AG04449 (cell line): ENCODE measurements at regions of chr1 and their contacts with region 1.

Region 1: GRCh38 chr1:16078925-16079656 is 5.6 kb upstream of the FAM131C start:
- DNase-seq: no peak
- H3K4me3 ChIP-seq: no peak overlapping the region
- CTCF ChIP-seq: peak; percentile 96

Region 2: DNA sequence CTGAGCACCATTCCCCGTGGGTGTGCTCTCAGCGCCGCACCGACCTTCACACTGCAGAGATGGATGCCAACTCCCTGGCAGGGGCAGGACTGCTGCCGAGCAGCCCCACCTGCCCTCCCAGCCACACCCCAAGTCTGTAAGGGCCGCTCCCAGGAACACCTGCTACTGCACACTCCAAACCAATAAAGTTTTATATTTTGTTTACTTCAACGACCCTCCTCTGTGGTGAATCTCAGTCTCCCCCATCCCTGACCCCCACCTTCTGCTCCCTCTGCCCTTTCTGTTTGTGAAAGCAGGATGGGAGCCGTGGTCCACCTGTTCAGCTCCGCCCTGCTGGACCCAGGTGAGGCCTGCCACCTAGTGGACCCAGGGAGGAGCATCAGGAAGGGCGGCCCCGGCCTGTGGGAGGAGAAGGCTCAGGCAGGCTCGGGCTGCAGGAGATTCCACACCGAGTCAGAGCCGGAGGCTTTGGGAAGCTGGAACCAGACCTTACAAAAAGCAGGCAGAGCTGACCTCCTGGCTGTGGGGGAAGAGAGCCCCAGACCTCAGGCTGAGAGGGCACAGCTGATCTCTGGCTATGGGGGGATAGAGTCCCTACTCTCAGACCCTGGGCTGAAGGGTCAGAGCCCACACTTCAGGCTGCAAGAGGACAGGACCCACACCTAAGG is 337.8 kb before region 1 on chr1:
- CTCF ChIA-PET with region 1: no interaction called
- POLR2A ChIA-PET with region 1: no interaction called
- DNase-seq: no peak
- H3K4me3 ChIP-seq: no peak overlapping the region
- CTCF ChIP-seq: peak; percentile 90

Region 3: DNA sequence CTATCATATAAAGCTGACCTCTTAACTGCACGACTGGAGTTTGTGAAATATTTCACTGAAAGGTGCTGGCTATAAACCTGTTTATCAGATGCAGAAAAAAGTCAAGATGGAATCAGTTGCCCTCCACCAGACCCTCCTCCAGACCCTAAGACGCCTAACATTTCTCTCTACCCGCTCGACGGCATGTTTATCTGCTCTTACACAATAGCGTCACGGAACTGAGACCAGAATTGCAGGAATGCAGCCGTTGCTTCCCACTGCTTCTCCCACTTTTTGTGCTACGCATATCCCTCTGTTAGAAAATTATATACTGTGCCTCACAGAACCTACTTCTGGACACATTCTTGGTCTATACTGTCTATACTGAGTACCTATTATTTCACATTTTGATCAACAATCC is 22.5 kb after region 1 on chr1:
- CTCF ChIA-PET with region 1: interaction called, 126 read pairs
- POLR2A ChIA-PET with region 1: no interaction called
- DNase-seq: no peak
- H3K4me3 ChIP-seq: no peak overlapping the region
- CTCF ChIP-seq: no peak

Region 4: DNA sequence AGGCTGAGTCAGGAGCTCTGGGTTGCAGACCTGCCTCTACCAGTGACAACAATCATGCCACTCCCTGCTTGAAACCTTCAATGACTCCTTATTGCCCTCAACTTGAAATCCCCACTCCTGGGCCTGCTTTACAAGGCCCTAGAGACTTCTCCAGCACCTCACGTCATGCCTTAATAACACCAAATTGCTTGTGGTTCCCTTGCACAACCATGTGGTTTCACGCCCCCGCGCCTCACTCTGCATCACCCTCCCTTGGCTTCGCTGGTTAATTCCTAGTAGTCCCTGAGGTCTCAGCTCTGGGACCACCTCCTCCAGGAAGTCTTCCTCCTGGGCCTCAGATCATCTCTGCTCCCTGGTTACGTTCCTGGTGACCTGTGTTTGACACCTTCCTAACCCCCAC is 43.8 kb after region 1 on chr1:
- CTCF ChIA-PET with region 1: interaction called, 56 read pairs
- POLR2A ChIA-PET with region 1: no interaction called
- DNase-seq: peak; percentile 88
- H3K4me3 ChIP-seq: no peak overlapping the region
- CTCF ChIP-seq: no peak

Region 5: DNA sequence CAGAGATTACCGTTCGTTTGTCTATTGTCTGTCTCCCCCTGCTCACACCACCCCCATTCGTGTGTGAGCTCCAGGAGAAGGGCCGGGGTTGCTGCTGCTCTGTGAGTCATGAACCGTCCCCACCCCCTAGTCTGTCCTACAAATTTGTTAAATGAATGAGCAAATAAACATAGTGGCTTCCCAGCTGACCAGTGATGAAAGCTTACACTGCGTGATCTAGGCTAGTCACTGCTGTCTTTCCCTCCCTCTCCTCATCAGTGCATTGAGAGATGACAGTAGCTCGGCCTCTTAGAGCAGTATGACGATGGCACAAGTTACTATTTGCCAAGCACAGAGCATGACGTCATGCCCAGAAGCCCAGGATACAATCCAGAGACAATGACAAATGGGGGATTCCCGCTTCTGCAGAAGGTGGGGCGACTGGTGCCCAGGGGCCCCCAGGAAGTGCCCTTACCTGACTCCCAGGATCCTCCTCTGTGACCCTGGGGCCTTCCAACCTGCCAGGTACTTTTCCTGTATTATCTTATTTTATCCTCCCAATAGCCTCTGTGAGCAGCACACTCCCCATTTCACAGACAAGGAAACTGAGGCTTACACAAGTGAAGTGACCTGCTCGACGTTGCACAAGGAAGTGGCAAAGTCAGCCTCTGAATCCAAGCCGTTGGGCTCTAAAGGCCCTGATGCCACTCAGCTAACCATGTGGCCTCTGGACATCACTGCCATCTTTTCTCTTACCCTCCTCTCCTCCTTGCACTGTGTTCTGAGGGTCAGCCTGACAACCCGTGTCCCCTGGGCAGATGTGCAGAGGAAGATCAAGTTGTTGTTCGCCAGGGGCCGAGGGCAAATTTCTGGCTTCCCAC is 85.4 kb after region 1 on chr1:
- CTCF ChIA-PET with region 1: interaction called, 52 read pairs
- POLR2A ChIA-PET with region 1: no interaction called
- DNase-seq: peak; percentile 86
- H3K4me3 ChIP-seq: no peak overlapping the region
- CTCF ChIP-seq: no peak

Region 6: DNA sequence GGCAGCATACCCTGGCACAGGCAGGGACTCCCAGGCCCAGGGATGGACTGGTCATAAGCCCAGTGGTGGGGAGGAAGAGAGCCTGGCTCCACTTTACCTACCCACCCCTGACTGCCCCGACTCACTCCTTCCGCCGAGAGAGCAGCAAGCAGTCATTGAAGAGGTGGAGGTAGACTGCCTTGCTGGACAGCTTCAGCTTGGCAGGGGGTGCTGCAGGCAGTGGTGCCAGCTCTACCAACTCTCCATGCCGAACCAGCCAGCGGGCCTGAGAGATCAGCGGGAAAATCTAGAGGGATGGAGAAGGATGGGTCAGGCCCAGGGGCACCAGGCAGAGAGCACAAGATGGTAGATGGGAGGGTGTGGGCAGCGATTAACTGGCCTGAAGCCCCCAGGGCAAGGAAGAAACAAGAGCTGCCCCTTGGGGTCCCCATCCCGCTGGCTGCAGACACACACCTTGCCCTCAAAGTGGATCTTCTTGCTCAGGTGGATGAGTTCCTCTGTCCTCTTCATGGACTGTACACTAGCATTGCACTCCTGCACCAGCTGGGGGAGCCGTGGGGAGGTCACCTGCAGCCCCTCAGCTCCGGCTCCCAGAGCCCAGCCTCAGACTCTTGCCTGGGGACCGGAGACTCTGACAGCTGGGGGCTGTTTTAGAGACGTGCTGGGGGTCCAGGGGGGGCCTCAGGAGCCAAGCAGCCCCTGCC is 125.7 kb after region 1 on chr1:
- CTCF ChIA-PET with region 1: interaction called, 132 read pairs
- POLR2A ChIA-PET with region 1: no interaction called
- DNase-seq: no peak
- H3K4me3 ChIP-seq: no peak overlapping the region
- CTCF ChIP-seq: peak; percentile 40

Region 7: GRCh38 chr1:16366722-16367257 is 287.7 kb after region 1 on chr1 and contains the start of gene SZRD1:
- CTCF ChIA-PET with region 1: interaction called, 96 read pairs
- POLR2A ChIA-PET with region 1: no interaction called
- DNase-seq: peak; percentile 98
- H3K4me3 ChIP-seq: peak within 1 kb of the TSS; percentile 87
- CTCF ChIP-seq: no peak